ENCODE measurements at regions of chr12 and their contacts with region 1.

Region 1: GRCh38 chr12:113912760-113913329 is 53.3 kb downstream of the RBM19 start:
- DNase-seq: peak; percentile 77 to 94
- H3K4me3 ChIP-seq: no peak overlapping the region
- H3K27ac ChIP-seq: no peak overlapping the region
- H3K4me1 ChIP-seq: peaks cover 0 to 2% (median 0%) of the 10 kb centered on the region in 4 experiments; a peak in 1 of 7 replicates
- H3K27me3 ChIP-seq: no peaks in the 10 kb centered on the region
- CTCF ChIP-seq: peak; percentile 86 to 95 (median 94)
- EP300 ChIP-seq: no peak
- POLR2A ChIP-seq: no peak
- RAD21 ChIP-seq: peak; percentile 97 to 99

Region 2: DNA sequence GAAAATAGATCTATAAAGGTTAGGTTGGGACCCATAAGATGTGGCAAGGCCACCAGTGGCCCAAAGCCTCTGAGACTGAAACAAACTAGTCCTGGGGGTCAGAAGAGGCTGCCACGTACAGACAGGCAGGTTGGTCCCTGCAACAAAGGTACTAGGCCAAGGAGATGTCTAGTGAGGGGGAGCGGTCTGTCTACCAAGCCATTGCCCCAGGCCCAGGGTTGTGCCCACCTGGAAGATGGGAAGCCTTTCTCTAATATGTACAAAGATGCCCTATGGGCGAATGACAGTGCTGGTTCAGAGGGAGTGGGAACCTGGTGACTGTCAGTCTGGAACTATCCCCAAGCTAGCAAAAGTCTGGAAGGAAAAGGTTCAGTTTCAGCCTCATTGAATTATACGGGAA is 179.9 kb before region 1 on chr12:
- CTCF ChIA-PET with region 1: no interaction called
- POLR2A ChIA-PET with region 1: no interaction called
- DNase-seq: no peak
- H3K4me3 ChIP-seq: no peak overlapping the region
- H3K27ac ChIP-seq: no peak overlapping the region
- H3K4me1 ChIP-seq: peaks cover 0 to 5% (median under 1%) of the 10 kb centered on the region in 4 experiments; a peak in 1 of 7 replicates
- H3K27me3 ChIP-seq: no peaks in the 10 kb centered on the region
- CTCF ChIP-seq: no peak
- EP300 ChIP-seq: no peak
- POLR2A ChIP-seq: no peak
- RAD21 ChIP-seq: no peak

Region 3: GRCh38 chr12:113818833-113819232 is 94.0 kb before region 1 on chr12:
- CTCF ChIA-PET with region 1: interaction called, 17 read pairs
- POLR2A ChIA-PET with region 1: no interaction called
- DNase-seq: peak; percentile 23 to 86
- H3K4me3 ChIP-seq: no peak overlapping the region
- H3K27ac ChIP-seq: no peak overlapping the region
- H3K4me1 ChIP-seq: peaks cover 0 to 5% (median 4%) of the 10 kb centered on the region in 4 experiments; a peak in 5 of 7 replicates
- H3K27me3 ChIP-seq: no peaks in the 10 kb centered on the region
- CTCF ChIP-seq: peak; percentile 71 to 82 (median 74)
- EP300 ChIP-seq: no peak
- POLR2A ChIP-seq: no peak
- RAD21 ChIP-seq: peak; percentile 72 to 84

Region 4: DNA sequence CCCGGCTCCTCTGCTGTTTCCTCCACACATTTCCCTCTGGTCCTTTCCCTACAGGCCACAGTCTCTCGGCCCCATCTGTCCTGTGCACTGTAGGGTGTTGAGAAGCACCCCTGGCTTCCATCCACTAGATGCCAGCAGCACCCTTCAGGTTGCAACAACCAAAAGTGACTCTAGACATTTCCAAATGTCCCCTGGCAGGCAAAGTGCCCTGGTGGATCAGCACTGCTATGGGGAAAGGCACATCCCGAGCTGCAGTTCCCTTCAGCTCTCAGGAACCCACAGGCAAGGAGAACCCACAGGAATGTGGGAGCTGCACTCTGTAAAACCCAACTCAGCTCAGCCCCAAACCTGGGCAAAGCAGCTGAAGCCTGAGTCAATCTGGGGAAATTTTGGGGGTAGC is 23.8 kb before region 1 on chr12:
- CTCF ChIA-PET with region 1: interaction called, 19 read pairs
- POLR2A ChIA-PET with region 1: no interaction called
- DNase-seq: no peak
- H3K4me3 ChIP-seq: no peak overlapping the region
- H3K27ac ChIP-seq: no peak overlapping the region
- H3K4me1 ChIP-seq: peaks cover 0 to 5% (median 2%) of the 10 kb centered on the region in 4 experiments; a peak in 4 of 7 replicates
- H3K27me3 ChIP-seq: no peaks in the 10 kb centered on the region
- CTCF ChIP-seq: peak; percentile 2 to 25 (median 16); a peak in 3 of 4 replicates
- EP300 ChIP-seq: no peak
- POLR2A ChIP-seq: no peak
- RAD21 ChIP-seq: peak; percentile 38 to 62

Region 5: DNA sequence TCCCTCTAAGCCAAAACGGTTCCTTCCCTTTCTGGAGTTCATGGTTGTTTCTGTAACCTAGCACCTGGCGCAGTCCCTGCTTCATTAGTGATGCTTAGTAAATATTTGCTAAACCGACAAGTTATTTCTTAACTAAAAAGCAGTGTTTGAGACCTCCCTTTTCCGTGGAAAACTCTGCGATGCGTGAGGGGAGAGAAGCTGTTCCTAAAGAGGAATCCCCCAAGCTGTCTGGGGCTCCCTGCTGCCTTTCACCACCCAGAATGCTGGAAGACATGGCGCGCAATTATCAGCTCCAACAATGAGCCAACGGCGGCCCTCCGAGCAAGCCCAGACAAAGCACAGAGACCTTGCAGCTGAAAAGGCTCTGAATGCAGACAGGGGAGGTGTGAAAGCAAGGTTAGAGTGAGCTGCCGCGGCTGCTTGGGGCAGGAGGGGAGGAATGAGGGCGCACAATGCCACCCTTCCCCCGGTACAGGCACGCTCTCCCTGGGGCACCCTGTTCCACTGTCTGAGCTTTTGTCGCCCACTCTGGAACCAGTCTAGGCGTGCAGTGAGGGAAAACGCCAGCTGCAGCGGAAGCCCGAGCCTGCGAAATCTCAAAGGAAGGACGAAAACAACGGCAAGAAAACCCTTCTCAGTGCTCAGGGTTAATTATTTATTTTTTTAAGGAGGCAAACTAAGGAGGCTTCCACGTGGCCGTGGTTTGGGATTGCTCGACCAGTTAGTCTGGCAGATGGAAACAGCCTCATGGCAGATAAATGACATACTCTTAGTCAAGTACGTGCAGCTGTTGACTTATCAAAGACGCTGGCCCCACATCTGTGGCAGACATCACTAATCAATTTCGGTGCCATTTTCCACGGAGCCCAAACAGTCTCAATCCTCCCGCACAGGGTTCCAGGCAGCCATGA is 13.0 kb before region 1 on chr12:
- CTCF ChIA-PET with region 1: interaction called, 21 read pairs
- POLR2A ChIA-PET with region 1: interaction called, 3 read pairs
- DNase-seq: no peak
- H3K4me3 ChIP-seq: no peak overlapping the region
- H3K27ac ChIP-seq: no peak overlapping the region
- H3K4me1 ChIP-seq: peaks cover 0 to 6% (median under 1%) of the 10 kb centered on the region in 4 experiments; a peak in 3 of 7 replicates
- H3K27me3 ChIP-seq: no peaks in the 10 kb centered on the region
- CTCF ChIP-seq: no peak
- EP300 ChIP-seq: no peak
- POLR2A ChIP-seq: no peak
- RAD21 ChIP-seq: no peak

Measured in H1 (cell line).